ENCODE measurements at regions of chr11 and their contacts with region 1.

Region 1: GRCh38 chr11:108253176-108253575 is 30.3 kb downstream of the ATM start:
- DNase-seq: no peak
- ATAC-seq: no peak
- H3K4me3 ChIP-seq: no peak overlapping the region
- H3K27ac ChIP-seq: no peak overlapping the region
- H3K4me1 ChIP-seq: no peaks in the 10 kb centered on the region
- H3K27me3 ChIP-seq: no peaks in the 10 kb centered on the region

Region 2: DNA sequence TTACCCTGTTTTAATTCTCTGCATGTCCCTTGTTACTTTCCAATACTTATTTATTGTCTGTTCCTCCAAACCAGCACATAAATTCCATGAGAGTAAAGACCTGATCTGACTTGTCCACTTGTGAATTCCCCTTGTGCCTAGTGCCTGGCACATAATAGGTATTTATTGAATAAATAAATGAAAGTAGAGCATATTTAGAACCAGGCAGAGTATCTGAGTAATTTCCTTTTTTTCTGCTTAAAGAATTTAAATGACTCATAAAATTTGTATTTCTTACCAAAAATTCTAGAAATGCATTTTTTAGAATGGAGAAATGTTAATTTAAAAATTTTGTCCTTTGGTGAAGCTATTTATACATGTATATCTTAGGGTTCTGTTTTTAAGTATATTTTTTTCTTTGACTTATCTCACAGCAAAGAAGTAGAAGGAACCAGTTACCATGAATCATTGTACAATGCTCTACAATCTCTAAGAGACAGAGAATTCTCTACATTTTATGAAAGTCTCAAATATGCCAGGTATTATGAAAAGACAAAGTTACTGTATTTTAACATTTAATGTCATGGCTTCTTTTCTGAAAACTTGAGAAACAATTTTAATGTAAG is 66.5 kb after region 1 on chr11:
- intact Hi-C with region 1: no loop called
- DNase-seq: no peak
- ATAC-seq: no peak
- H3K4me3 ChIP-seq: no peak overlapping the region
- H3K27ac ChIP-seq: no peak overlapping the region
- H3K4me1 ChIP-seq: no peaks in the 10 kb centered on the region
- H3K27me3 ChIP-seq: no peaks in the 10 kb centered on the region

Region 3: GRCh38 chr11:109772841-109773400 is 1519.7 kb after region 1 on chr11:
- intact Hi-C with region 1: loop called in 1 of 2 experiments (anchors 10 kb)
- DNase-seq: no peak
- ATAC-seq: no peak
- H3K4me3 ChIP-seq: no peak overlapping the region
- H3K27ac ChIP-seq: no peak overlapping the region
- H3K4me1 ChIP-seq: no peaks in the 10 kb centered on the region
- H3K27me3 ChIP-seq: peaks cover 0 to 3% of the 10 kb centered on the region in 2 donors